ENCODE measurements at regions of chr16 and their contacts with region 1.

Region 1: GRCh38 chr16:57945740-57946138 is 25.2 kb downstream of the CNGB1 start:
- DNase-seq: no peak
- ATAC-seq: peak; percentile 68
- H3K4me3 Mint-ChIP-seq: no peak overlapping the region
- H3K27ac Mint-ChIP-seq: no peak overlapping the region
- H3K4me1 Mint-ChIP-seq: peaks cover 6% of the 10 kb centered on the region; the same call in 1 of the 2 replicates
- H3K27me3 Mint-ChIP-seq: no peaks in the 10 kb centered on the region
- CTCF ChIP-seq: peak; percentile 22; the same call in 1 of the 2 replicates

Region 2: GRCh38 chr16:57899771-57900661 is 45.7 kb before region 1 on chr16:
- CTCF ChIA-PET with region 1: no interaction called
- POLR2A ChIA-PET with region 1: no interaction called
- DNase-seq: peak; percentile 84
- ATAC-seq: peak; percentile 71
- H3K4me3 Mint-ChIP-seq: no peak overlapping the region
- H3K27ac Mint-ChIP-seq: no peak overlapping the region
- H3K4me1 Mint-ChIP-seq: peaks cover 9% of the 10 kb centered on the region; the same call in 1 of the 2 replicates
- H3K27me3 Mint-ChIP-seq: no peaks in the 10 kb centered on the region
- CTCF ChIP-seq: peak; percentile 82

Region 3: DNA sequence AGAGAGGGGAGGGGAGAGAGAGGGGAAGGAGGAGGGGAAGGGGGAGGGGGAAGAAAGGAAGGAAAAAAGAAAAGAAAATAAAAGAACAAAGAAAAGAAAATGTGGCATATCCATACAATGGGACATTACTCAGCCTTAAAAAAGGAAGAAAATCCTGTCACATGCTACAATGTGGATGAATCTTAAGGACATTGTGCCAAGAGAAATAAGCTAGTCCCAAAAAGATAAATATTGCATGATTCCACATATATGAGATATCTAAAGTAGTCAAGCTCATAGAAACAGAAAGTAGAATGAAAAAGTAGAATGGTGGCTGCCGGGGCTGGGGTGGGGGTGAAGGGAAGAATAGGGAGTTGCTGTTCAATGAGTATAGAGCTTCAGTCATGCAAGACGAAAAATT is 15.2 kb before region 1 on chr16:
- CTCF ChIA-PET with region 1: interaction called, 19 read pairs
- POLR2A ChIA-PET with region 1: no interaction called
- DNase-seq: no peak
- ATAC-seq: no peak
- H3K4me3 Mint-ChIP-seq: no peak overlapping the region
- H3K27ac Mint-ChIP-seq: no peak overlapping the region
- H3K4me1 Mint-ChIP-seq: no peaks in the 10 kb centered on the region
- H3K27me3 Mint-ChIP-seq: no peaks in the 10 kb centered on the region
- CTCF ChIP-seq: no peak

Measured in WTC11 (cell line).